GM12878 (cell line): ENCODE measurements at regions of chr7 and their contacts with region 1.

Region 1: DNA sequence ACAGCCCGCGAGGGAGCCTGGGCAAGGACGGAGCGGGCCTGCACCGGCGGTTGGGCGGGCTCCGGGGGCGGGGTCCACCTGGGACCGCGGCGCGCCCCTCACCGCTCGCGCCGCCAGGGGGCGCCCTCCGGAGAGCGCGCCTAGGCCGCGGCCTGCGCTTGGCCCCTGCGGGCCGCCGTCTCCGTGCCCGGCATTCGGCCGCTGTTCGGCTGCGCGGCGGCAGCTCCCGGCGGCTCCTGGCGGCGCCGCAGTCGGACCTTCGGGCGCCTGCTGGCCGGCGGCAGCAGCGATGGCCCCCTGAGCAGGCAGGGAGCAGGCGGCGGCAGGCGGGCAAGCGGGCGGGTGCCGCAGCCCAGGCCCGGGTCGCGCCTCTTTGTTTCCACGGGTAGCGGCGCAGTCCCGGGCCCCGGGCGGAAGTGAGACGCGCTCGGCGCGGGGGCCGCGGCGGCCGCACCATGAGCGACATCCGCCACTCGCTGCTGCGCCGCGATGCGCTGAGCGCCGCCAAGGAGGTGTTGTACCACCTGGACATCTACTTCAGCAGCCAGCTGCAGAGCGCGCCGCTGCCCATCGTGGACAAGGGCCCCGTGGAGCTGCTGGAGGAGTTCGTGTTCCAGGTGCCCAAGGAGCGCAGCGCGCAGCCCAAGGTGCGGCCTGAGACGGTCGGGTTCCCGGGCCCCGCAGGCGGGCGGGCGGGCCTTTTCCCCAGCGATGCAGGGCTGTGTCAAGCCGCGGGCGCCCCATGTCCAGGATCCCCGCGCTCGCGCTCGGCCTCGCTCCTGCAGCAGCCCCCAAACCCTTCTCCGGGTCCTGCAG is at the start of gene INTS15:
- DNase-seq: no peak
- ATAC-seq: peak; percentile 93
- H3K4me3 ChIP-seq: peak within 1 kb of the TSS; percentile 87
- H3K27ac ChIP-seq: peak within 1 kb of the TSS; percentile 79
- H3K4me1 ChIP-seq: peaks cover 10% of the 10 kb centered on the region
- H3K27me3 ChIP-seq: no peaks in the 10 kb centered on the region
- CTCF ChIP-seq: peak; percentile 53 to 78 (median 68); a peak in 5 of 6 replicates
- EP300 ChIP-seq: no peak
- POLR2A ChIP-seq: peak; percentile 82
- RAD21 ChIP-seq: peak; percentile 44; the same call in 1 of the 2 replicates
- polyA plus RNA-seq, gene INTS15: 0.89 to 2.4 TPM

Region 2: GRCh38 chr7:5854738-5855137 is 735.3 kb before region 1 on chr7:
- CTCF ChIA-PET with region 1: no interaction called
- POLR2A ChIA-PET with region 1: interaction called, 4 read pairs
- RAD21 ChIA-PET with region 1: no interaction called
- SMC1A ChIA-PET with region 1: no interaction called
- in situ Hi-C with region 1: no loop called
- intact Hi-C with region 1: loop called (anchors 10 kb)
- DNase-seq: no peak
- ATAC-seq: no peak
- H3K4me3 ChIP-seq: no peak overlapping the region
- H3K27ac ChIP-seq: no peak overlapping the region
- H3K4me1 ChIP-seq: no peaks in the 10 kb centered on the region
- H3K27me3 ChIP-seq: no peaks in the 10 kb centered on the region
- CTCF ChIP-seq: no peak
- EP300 ChIP-seq: no peak
- POLR2A ChIP-seq: no peak
- RAD21 ChIP-seq: no peak

Region 3: GRCh38 chr7:6577365-6578113 is 12.5 kb before region 1 on chr7 and contains the start of gene ZDHHC4:
- CTCF ChIA-PET with region 1: interaction called, 13 read pairs
- POLR2A ChIA-PET with region 1: interaction called, 11 read pairs
- RAD21 ChIA-PET with region 1: interaction called, 3 read pairs
- SMC1A ChIA-PET with region 1: interaction called, 7 read pairs
- in situ Hi-C with region 1: no loop called
- intact Hi-C with region 1: no loop called
- DNase-seq: peak; percentile 61
- ATAC-seq: peak; percentile 95
- H3K4me3 ChIP-seq: peak within 1 kb of the TSS; percentile 98
- H3K27ac ChIP-seq: peak within 1 kb of the TSS; percentile 75
- H3K4me1 ChIP-seq: peaks cover 29% of the 10 kb centered on the region
- H3K27me3 ChIP-seq: no peaks in the 10 kb centered on the region
- CTCF ChIP-seq: no peak
- EP300 ChIP-seq: no peak; a peak in 1 of 4 replicates
- POLR2A ChIP-seq: peak; percentile 96
- RAD21 ChIP-seq: no peak
- polyA plus RNA-seq, gene ZDHHC4: 34.5 to 37.9 TPM

Region 4: GRCh38 chr7:6706677-6707544 is 116.9 kb after region 1 on chr7 and contains the start of gene ZNF12:
- CTCF ChIA-PET with region 1: no interaction called
- POLR2A ChIA-PET with region 1: interaction called, 5 read pairs
- RAD21 ChIA-PET with region 1: no interaction called
- SMC1A ChIA-PET with region 1: no interaction called
- in situ Hi-C with region 1: no loop called
- intact Hi-C with region 1: loop called (anchors 5 kb)
- DNase-seq: peak; percentile 87
- ATAC-seq: peak; percentile 94
- H3K4me3 ChIP-seq: peak within 1 kb of the TSS; percentile 88
- H3K27ac ChIP-seq: peak within 1 kb of the TSS; percentile 77
- H3K4me1 ChIP-seq: peaks cover 3% of the 10 kb centered on the region; the same call in 1 of the 2 replicates
- H3K27me3 ChIP-seq: no peaks in the 10 kb centered on the region
- CTCF ChIP-seq: no peak
- EP300 ChIP-seq: no peak; a peak in 1 of 4 replicates
- POLR2A ChIP-seq: peak; percentile 91
- RAD21 ChIP-seq: no peak
- polyA plus RNA-seq, gene ZNF12: 6.7 to 7.2 TPM

Region 5: DNA sequence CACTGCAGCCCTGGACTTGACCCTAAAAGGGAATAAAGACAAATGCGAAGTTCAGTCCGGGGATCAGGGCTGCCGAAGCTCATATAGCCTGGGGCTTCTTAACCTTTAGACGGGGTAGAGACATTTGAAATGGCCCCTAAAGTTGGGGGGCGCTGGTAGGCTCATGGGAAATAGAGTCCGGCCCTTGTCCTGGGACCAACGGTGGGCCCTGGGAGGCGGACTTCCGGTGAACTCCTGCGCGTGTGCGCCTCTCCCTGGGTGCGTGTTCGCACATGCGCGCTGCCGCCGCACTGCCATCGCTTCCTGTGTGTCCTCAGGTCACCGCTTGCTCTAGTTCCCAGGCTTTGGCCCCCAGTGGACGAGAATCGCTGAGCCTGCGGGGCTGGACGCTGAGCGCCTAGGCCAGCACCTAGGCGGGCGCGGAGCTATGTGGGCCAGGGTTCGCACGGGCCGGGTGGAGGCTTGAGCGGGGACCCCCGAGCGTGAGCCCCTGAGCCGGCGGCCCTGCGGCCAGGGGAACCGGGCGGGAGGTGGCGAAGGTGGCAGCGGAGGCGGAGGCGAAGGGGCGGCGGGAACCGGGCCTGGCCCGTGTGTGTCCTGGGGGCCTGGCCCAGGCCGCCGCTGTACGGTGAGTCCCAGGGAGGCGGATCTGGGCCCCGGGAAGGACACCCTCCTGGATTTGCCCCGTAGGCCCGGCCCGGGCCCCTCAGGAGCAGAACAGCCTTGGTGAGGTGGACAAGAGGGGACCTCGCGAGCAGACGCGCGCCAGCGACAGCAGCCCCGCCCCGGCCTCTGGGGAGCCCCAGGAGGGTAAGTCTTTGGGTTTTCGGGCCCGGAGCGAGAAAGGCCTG is 139.7 kb after region 1 on chr7:
- CTCF ChIA-PET with region 1: no interaction called
- POLR2A ChIA-PET with region 1: no interaction called
- RAD21 ChIA-PET with region 1: interaction called, 3 read pairs
- SMC1A ChIA-PET with region 1: no interaction called
- in situ Hi-C with region 1: no loop called
- intact Hi-C with region 1: loop called (anchors 5 kb)
- DNase-seq: peak; percentile 83
- ATAC-seq: peak; percentile 98
- H3K4me3 ChIP-seq: peak overlapping the region; percentile 84
- H3K27ac ChIP-seq: peak overlapping the region; percentile 93
- H3K4me1 ChIP-seq: peaks cover 12% of the 10 kb centered on the region
- H3K27me3 ChIP-seq: no peaks in the 10 kb centered on the region
- CTCF ChIP-seq: no peak
- EP300 ChIP-seq: no peak; a peak in 1 of 4 replicates
- POLR2A ChIP-seq: peak; percentile 94
- RAD21 ChIP-seq: no peak